Right cardiac atrium (tissue), 5 donors: ENCODE measurements at regions of chr22 and their contacts with region 1.

Region 1: GRCh38 chr22:22546490-22546889 is 12.6 kb downstream of the PRAME start:
- DNase-seq: peak in 1 of 3 donors; percentile 60
- ATAC-seq: no peak
- H3K4me3 ChIP-seq: no peak overlapping the region
- H3K27ac ChIP-seq: no peak overlapping the region
- H3K4me1 ChIP-seq: no peaks in the 10 kb centered on the region
- H3K27me3 ChIP-seq: no peaks in the 10 kb centered on the region

Region 2: GRCh38 chr22:22375576-22376423 is 170.7 kb before region 1 on chr22:
- intact Hi-C with region 1: loop called in 1 of 4 experiments (anchors 5 kb)
- DNase-seq: no peak
- ATAC-seq: no peak
- H3K4me3 ChIP-seq: no peak overlapping the region
- H3K27ac ChIP-seq: no peak overlapping the region
- H3K4me1 ChIP-seq: no peaks in the 10 kb centered on the region
- H3K27me3 ChIP-seq: no peaks in the 10 kb centered on the region